Mammary epithelial cell (primary cell): ENCODE measurements at regions of chr9 and their contacts with region 1.

Region 1: DNA sequence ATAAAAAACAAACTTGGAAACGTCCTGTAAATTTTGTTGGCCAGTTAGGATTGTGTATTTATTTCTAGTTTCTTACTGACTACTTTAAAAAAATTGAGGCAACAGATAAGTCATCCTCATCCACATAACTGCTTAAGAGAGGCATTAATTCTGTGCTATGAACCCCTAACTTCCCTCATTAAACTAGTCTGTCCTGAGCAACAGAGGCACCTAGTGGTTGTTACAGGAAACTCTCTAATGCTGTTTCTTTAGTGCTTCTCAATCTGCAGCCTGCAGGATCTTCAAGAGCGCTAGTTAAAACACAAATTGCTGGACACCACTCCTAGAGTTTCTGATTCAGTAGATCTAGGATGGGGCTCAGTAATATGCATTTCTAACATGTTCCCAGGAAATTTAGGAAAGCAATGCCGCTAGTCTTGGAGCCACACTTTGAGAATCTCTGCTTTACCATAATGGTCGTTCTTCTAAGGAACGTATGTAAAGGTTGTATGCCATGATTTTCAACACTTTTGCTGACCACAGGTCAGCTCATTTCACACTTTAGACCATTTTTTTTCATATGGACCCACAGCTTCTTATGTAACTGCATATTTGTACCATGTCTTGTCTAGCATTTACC is 410.1 kb upstream of the SMARCA2 start:
- DNase-seq: peak; percentile 8
- H3K4me3 ChIP-seq: no peak overlapping the region
- H3K27ac ChIP-seq: no peak overlapping the region
- H3K4me1 ChIP-seq: no peaks in the 10 kb centered on the region
- H3K27me3 ChIP-seq: no peaks in the 10 kb centered on the region
- CTCF ChIP-seq: peak; percentile 39 to 62

Region 2: DNA sequence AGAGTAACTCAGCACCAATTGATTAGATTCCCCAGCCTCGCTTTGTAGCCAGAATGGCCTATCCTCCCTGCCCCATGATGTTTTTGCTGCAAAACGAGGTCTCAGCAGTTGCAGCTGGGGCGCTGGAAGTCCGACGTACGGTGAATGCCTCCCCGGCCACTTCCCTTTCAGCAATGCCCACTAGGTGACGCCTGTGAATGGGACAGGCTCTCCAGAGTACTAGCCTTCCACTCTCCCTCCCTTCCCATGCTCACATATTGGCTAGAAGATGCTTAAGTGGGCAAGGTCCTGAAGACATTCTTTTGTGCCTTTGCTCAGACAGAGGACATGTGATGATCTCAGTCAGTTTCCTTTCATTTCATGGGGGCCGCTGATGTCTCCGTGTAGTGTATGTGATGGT is 504.1 kb before region 1 on chr9:
- CTCF ChIA-PET with region 1: no interaction called
- dilution Hi-C with region 1: no loop called
- in situ Hi-C with region 1: no loop called
- intact Hi-C with region 1: loop called (anchors 5 kb)
- DNase-seq: peak; percentile 9
- H3K4me3 ChIP-seq: no peak overlapping the region
- H3K27ac ChIP-seq: no peak overlapping the region
- H3K4me1 ChIP-seq: no peaks in the 10 kb centered on the region
- H3K27me3 ChIP-seq: no peaks in the 10 kb centered on the region
- CTCF ChIP-seq: peak in 1 of 2 donors; percentile 53

Region 3: GRCh38 chr9:1460143-1460769 is 144.8 kb before region 1 on chr9:
- CTCF ChIA-PET with region 1: interaction called, 3 read pairs
- dilution Hi-C with region 1: no loop called
- in situ Hi-C with region 1: loop called in 1 of 2 experiments (anchors 25 kb)
- intact Hi-C with region 1: loop called (anchors 1 kb)
- DNase-seq: peak; percentile 2
- H3K4me3 ChIP-seq: no peak overlapping the region
- H3K27ac ChIP-seq: no peak overlapping the region
- H3K4me1 ChIP-seq: no peaks in the 10 kb centered on the region
- H3K27me3 ChIP-seq: no peaks in the 10 kb centered on the region
- CTCF ChIP-seq: peak; percentile 20 to 43